ENCODE measurements at regions of chr5 and their contacts with region 1.

Region 1: GRCh38 chr5:73431204-73431851 is 17.2 kb downstream of the FOXD1 start:
- DNase-seq: no peak
- H3K4me3 ChIP-seq: no peak overlapping the region
- H3K27ac ChIP-seq: no peak overlapping the region
- H3K4me1 ChIP-seq: peaks cover 0 to 4% (median 4%) of the 10 kb centered on the region in 4 experiments; a peak in 5 of 7 replicates
- H3K27me3 ChIP-seq: peaks cover 22 to 38% (median 33%) of the 10 kb centered on the region in 4 experiments
- CTCF ChIP-seq: no peak
- EP300 ChIP-seq: no peak
- POLR2A ChIP-seq: no peak
- RAD21 ChIP-seq: no peak

Region 2: DNA sequence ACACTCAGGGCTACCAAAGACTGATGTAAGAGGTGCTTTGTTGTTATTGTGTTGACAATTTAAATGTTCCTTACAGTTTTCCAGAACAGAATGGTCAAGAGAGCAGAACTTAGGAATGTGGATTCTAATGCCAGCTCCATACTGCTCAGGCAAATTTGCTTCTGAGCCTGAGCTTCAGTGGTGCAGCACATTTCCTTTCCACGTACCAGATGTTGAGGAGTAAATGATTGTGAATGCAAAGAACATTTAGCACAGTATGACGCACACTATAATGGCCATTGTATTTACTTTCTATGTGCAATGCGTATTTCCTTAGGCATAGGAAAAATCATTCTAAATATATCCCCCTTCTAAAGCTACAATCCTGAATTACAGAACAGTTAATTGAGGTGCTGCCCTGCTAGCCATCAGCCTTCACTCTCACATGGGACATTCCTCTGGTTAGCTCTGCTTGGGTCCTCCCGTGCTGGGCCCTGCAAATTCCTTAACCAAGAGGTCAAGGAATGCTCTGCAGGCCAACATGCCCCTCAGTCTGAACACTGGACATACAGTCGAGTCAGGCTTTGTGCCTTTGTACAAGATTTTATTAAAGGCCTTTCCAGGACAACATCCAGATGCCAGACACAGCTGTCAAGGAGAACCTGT is 279.4 kb before region 1 on chr5:
- CTCF ChIA-PET with region 1: no interaction called
- POLR2A ChIA-PET with region 1: no interaction called
- DNase-seq: no peak
- H3K4me3 ChIP-seq: no peak overlapping the region
- H3K27ac ChIP-seq: no peak overlapping the region
- H3K4me1 ChIP-seq: peaks cover 0 to 2% (median under 1%) of the 10 kb centered on the region in 4 experiments; a peak in 1 of 7 replicates
- H3K27me3 ChIP-seq: no peaks in the 10 kb centered on the region
- CTCF ChIP-seq: no peak
- EP300 ChIP-seq: no peak
- POLR2A ChIP-seq: no peak
- RAD21 ChIP-seq: no peak

Region 3: DNA sequence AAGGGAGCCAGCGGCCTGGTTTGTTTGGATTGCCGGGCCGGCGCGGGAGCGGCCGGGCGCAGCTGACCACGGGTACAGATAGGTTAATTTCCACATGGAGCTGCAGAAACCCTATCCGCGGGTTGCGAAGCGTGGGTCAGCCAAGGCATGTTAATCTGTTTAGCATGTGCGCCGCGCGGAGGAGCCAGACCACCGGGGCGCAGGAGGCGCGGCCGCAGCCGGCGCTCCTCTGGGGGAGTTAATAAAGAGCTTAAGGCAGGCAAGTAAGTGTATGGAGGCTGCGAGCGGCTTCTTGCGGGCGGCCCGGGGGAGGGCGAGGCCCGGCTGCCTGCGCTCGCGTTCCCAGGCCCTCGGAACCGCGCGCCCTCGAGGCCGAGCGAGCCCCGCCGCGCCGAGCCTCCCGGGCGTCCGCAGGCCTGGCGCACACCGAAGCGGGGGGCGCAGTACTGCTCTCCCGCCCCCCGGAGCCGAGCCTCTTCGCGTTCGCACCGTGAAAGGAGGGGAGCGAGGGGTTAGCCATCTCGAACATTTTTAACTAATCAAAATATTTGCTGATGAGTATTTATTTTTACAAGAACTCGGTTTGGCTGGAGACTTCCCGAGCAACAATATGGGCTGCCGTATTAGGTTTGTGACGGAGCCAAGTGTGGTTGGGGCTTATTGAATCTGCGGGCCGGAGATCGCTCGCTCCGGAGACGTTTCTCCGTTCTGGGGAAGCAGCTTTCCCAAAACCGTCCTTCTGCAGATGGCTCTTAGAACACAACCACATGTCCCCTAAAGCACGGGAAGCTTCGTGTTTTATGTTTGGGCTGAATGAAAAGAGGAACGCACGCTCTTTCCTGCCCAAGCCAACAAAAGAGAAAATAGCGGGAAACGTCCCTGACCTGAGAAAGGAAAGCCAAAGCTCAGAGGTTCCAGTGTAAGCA is 11.6 kb before region 1 on chr5:
- CTCF ChIA-PET with region 1: interaction called, 13 read pairs
- POLR2A ChIA-PET with region 1: interaction called, 3 read pairs
- DNase-seq: peak in 1 of 2 experiments; percentile 76
- H3K4me3 ChIP-seq: peak overlapping the region; percentile 49 to 64 (median 53)
- H3K27ac ChIP-seq: no peak overlapping the region
- H3K4me1 ChIP-seq: peaks cover 0 to 11% (median 0%) of the 10 kb centered on the region in 4 experiments; a peak in 4 of 7 replicates
- H3K27me3 ChIP-seq: peaks cover 46 to 69% (median 60%) of the 10 kb centered on the region in 4 experiments
- CTCF ChIP-seq: no peak; a peak in 1 of 4 replicates
- EP300 ChIP-seq: no peak
- POLR2A ChIP-seq: no peak
- RAD21 ChIP-seq: no peak; a peak in 1 of 4 replicates